H1 (cell line): ENCODE measurements at regions of chr15 and their contacts with region 1.

Region 1: DNA sequence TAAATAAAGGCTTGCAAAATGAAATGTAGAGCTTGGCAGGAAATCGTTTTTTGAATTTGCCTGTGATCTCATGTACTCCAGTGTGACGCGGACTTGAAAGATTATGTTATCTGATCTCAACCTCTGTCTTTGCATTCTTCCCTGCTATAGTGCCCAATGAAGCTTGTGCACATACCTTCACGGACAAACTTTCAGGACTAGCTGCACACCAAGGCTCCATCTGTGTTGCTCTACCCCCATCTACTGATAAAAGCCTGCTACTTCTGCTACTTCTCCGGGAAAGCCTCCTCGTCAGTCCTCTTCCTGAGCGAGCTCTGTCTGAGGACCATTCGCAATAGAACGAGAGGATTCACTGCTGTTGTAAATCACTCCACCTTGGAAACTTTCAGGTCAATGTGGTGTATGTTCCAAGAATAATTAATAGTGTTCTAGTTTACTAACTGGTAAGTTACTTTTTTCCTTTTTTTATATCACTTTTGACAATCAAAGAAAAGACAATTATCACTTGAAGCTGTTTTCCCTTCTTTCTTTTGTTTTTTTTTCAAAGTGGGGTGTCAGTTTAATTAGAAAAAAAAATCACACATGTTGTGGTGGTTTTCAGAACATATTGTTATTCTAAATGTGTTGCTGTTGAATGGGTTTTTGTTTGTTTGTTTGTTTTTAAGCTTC is 217.6 kb downstream of the ARRDC4 start:
- DNase-seq: peak in 1 of 2 experiments; percentile 59
- H3K4me3 ChIP-seq: no peak overlapping the region
- H3K27ac ChIP-seq: no peak overlapping the region
- H3K4me1 ChIP-seq: peaks cover 0 to 3% (median 2%) of the 10 kb centered on the region in 4 experiments; a peak in 4 of 7 replicates
- H3K27me3 ChIP-seq: no peaks in the 10 kb centered on the region
- CTCF ChIP-seq: peak; percentile 60 to 94 (median 89)
- EP300 ChIP-seq: no peak
- POLR2A ChIP-seq: no peak
- RAD21 ChIP-seq: peak; percentile 98 to 100

Region 2: GRCh38 chr15:97903971-97904572 is 274.0 kb before region 1 on chr15:
- CTCF ChIA-PET with region 1: interaction called, 61 read pairs
- POLR2A ChIA-PET with region 1: no interaction called
- DNase-seq: peak; percentile 70 to 87
- H3K4me3 ChIP-seq: no peak overlapping the region
- H3K27ac ChIP-seq: no peak overlapping the region
- H3K4me1 ChIP-seq: peaks cover 0 to 2% (median 0%) of the 10 kb centered on the region in 4 experiments; a peak in 2 of 7 replicates
- H3K27me3 ChIP-seq: peaks cover 0 to 2% (median 0%) of the 10 kb centered on the region in 4 experiments; a peak in 2 of 7 replicates
- CTCF ChIP-seq: peak; percentile 75 to 96 (median 77)
- EP300 ChIP-seq: no peak
- POLR2A ChIP-seq: no peak
- RAD21 ChIP-seq: peak; percentile 81 to 85

Region 3: DNA sequence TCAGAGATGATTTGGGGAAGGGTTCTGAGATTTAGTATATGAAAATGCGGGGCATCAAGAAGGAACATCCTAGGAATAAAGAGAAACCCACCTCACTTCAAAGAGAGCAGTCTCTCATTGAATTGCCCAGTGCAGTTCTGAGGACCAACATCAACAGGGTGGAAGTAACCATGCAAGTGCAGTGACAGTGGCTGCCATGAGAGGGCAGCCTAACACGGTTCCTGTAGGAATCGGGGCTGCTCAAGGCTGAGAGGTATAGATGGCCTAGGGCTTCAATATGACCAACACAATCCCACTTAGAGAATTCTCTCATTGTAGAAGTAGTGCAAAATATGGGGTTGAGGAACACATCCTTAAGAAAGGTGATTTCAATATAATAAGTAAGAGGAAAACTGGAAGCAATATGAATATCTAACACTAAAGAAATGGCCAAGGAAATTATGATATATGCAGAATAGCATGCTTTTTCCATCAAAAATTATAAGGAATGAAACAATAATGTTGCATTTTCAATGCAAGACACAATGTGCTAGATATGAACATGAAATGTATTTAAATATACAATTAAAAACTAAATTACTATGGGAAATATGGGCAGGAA is 268.7 kb before region 1 on chr15:
- CTCF ChIA-PET with region 1: interaction called, 61 read pairs
- POLR2A ChIA-PET with region 1: no interaction called
- DNase-seq: peak; percentile 43 to 86
- H3K4me3 ChIP-seq: no peak overlapping the region
- H3K27ac ChIP-seq: no peak overlapping the region
- H3K4me1 ChIP-seq: no peaks in the 10 kb centered on the region
- H3K27me3 ChIP-seq: peaks cover 0 to 2% (median 0%) of the 10 kb centered on the region in 4 experiments; a peak in 2 of 7 replicates
- CTCF ChIP-seq: peak; percentile 86 to 95 (median 93)
- EP300 ChIP-seq: no peak
- POLR2A ChIP-seq: no peak
- RAD21 ChIP-seq: peak; percentile 85 to 90

Region 4: GRCh38 chr15:98085003-98085639 is 92.9 kb before region 1 on chr15:
- CTCF ChIA-PET with region 1: interaction called, 18 read pairs
- POLR2A ChIA-PET with region 1: no interaction called
- DNase-seq: no peak
- H3K4me3 ChIP-seq: no peak overlapping the region
- H3K27ac ChIP-seq: no peak overlapping the region
- H3K4me1 ChIP-seq: no peaks in the 10 kb centered on the region
- H3K27me3 ChIP-seq: no peaks in the 10 kb centered on the region
- CTCF ChIP-seq: peak in 2 of 3 experiments; percentile 38 to 57; a peak in 2 of 4 replicates
- EP300 ChIP-seq: no peak
- POLR2A ChIP-seq: no peak
- RAD21 ChIP-seq: peak; percentile 56 to 61

Region 5: GRCh38 chr15:98142572-98142971 is 35.5 kb before region 1 on chr15:
- CTCF ChIA-PET with region 1: interaction called, 46 read pairs
- POLR2A ChIA-PET with region 1: no interaction called
- DNase-seq: no peak
- H3K4me3 ChIP-seq: no peak overlapping the region
- H3K27ac ChIP-seq: no peak overlapping the region
- H3K4me1 ChIP-seq: no peaks in the 10 kb centered on the region; a peak in 1 of 7 replicates
- H3K27me3 ChIP-seq: 0 out of 7 replicates have a peak, but pooled peaks cover 0 to 3% (median 0%) of the 10 kb centered on the region in 4 experiments
- CTCF ChIP-seq: peak; percentile 68 to 74 (median 72)
- EP300 ChIP-seq: no peak
- POLR2A ChIP-seq: no peak
- RAD21 ChIP-seq: peak; percentile 78 to 81

Region 6: DNA sequence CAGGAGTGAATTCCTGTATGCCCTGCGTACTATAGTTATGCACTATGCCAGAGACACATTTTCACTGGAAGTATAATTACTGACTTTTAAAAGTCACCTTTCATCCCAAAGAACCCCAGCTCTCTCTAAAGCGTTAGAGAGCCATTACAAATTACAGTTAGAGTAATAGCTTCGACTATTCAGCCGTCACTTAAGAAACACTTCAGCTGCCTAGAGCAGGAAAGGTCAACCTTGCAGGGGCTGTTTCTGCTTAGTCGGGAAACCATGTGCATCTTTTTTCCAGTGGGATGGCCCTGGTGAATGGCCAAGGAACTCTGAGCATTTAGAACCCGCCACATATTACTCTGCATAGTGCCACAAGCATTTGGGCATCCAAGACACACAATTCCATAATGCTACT is 18.3 kb after region 1 on chr15:
- CTCF ChIA-PET with region 1: interaction called, 20 read pairs
- POLR2A ChIA-PET with region 1: no interaction called
- DNase-seq: no peak
- H3K4me3 ChIP-seq: no peak overlapping the region
- H3K27ac ChIP-seq: no peak overlapping the region
- H3K4me1 ChIP-seq: no peaks in the 10 kb centered on the region
- H3K27me3 ChIP-seq: no peaks in the 10 kb centered on the region
- CTCF ChIP-seq: no peak
- EP300 ChIP-seq: no peak
- POLR2A ChIP-seq: no peak
- RAD21 ChIP-seq: no peak

Region 7: GRCh38 chr15:98421419-98422129 is 243.5 kb after region 1 on chr15:
- CTCF ChIA-PET with region 1: interaction called, 14 read pairs
- POLR2A ChIA-PET with region 1: no interaction called
- DNase-seq: peak; percentile 39 to 96
- H3K4me3 ChIP-seq: peak overlapping the region in 3 of 4 experiments; percentile 40 to 57 (median 54); a peak in 7 of 8 replicates
- H3K27ac ChIP-seq: no peak overlapping the region
- H3K4me1 ChIP-seq: peaks cover 0 to 6% (median 3%) of the 10 kb centered on the region in 4 experiments; a peak in 4 of 7 replicates
- H3K27me3 ChIP-seq: peaks cover 13 to 35% (median 28%) of the 10 kb centered on the region in 4 experiments
- CTCF ChIP-seq: peak; percentile 87 to 92 (median 88)
- EP300 ChIP-seq: no peak
- POLR2A ChIP-seq: no peak
- RAD21 ChIP-seq: peak; percentile 95 to 97